Caco-2 (cell line): ENCODE measurements at regions of chr3 and their contacts with region 1.

Region 1: DNA sequence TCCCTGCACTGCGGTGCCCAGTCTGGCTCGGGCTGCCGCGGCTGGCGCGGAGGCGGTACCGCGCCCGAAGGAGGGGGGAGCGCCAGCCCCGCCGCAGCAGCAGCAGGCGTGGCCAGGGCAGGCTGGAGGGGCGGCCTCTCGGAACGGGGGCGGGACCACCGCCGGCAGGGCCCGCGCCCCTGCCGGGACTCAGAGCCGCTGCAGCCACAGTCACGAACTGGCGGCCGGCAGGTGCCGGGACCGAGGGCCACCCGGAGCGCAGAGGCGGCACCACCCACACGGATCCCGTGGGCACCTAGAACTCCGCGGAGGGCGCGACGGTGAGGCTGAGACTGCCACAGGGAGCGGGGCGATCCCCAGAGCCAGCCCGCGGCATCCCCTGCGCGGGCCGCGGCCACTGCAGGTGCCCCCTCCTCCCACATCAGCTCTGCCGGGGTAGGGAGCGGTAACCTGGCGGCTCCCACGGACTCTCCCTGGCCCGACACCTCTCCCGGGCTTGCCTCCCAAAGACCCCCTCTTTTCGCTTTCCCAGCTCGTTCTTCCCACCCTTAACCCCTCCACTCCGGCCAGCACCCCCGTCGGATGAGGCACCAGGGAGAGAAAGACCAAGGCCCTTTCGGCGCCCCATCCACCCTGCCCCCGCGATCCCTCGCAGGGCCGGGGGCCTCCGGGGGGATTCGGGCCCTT is at the start of gene VWA5B2:
- DNase-seq: peak; percentile 62 to 84
- H3K4me3 ChIP-seq: peak within 1 kb of the TSS; percentile 58
- H3K4me3 Mint-ChIP-seq: peak within 1 kb of the TSS; percentile 70
- H3K27ac Mint-ChIP-seq: no peak within 1 kb of the TSS
- H3K4me1 ChIP-seq: peaks cover 9% of the 10 kb centered on the region
- H3K4me1 Mint-ChIP-seq: peaks cover 7% of the 10 kb centered on the region
- H3K27me3 ChIP-seq: peaks cover 5% of the 10 kb centered on the region
- H3K27me3 Mint-ChIP-seq: peaks cover 27% of the 10 kb centered on the region
- CTCF ChIP-seq: peak in 1 of 2 experiments; percentile 5
- total RNA-seq, gene VWA5B2: 0.79 and 1.6 TPM in 2 replicates

Region 2: DNA sequence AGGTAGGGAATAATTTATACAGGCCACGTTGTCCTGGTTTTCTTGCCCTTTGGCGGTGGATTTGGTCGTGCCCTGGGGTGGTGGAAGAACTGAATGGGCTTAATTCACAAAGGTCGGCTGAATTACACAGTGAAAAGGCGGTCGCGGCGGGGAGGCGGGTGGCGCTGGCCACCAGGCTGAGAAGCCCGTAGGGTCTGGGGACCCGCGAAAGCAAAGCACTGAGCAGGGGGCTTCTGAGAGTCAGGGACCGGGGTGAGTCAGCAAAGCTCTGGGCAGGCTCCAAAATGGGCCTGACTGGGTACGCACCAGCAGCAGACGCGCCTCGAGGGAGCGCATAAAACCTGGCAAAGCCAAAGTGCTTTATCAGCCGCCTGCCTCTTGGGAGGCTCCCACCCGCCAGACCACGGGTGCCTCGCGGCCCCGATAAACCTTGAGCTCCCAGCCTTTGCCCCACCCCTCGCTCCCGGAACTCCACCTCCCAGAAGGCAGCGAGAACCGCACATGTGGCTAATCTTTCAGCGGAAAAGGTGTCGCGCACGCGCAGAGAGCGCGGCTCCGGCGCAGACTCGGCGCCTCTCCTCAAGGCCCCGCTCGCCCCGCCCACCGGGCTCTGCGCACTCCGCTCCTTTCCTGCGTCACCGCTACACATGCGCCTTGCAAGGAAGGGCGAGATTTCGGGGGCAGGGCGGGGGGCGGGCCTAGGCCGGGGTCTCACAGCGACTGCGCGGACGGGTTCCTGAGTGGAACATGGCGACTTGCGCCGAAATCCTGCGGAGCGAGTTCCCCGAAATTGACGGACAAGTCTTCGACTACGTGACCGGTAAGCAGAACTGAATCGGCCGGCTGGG is 43.9 kb before region 1 on chr3 and contains the start of gene ABCF3:
- CTCF ChIA-PET with region 1: interaction called, 3 read pairs
- POLR2A ChIA-PET with region 1: interaction called, 4 read pairs
- intact Hi-C with region 1: loop called (anchors 2 kb)
- DNase-seq: peak; percentile 98 to 99
- H3K4me3 ChIP-seq: peak within 1 kb of the TSS; percentile 95
- H3K4me3 Mint-ChIP-seq: peak within 1 kb of the TSS; percentile 86
- H3K27ac Mint-ChIP-seq: peak within 1 kb of the TSS; percentile 96
- H3K4me1 ChIP-seq: 0 out of 2 replicates have a peak, but pooled peaks cover 8% of the 10 kb centered on the region
- H3K4me1 Mint-ChIP-seq: peaks cover 15% of the 10 kb centered on the region
- H3K27me3 ChIP-seq: no peaks in the 10 kb centered on the region
- H3K27me3 Mint-ChIP-seq: no peaks in the 10 kb centered on the region
- CTCF ChIP-seq: no peak
- total RNA-seq, gene ABCF3: 68.8 and 69.8 TPM in 2 replicates

Region 3: GRCh38 chr3:184240384-184241140 is 11.0 kb after region 1 on chr3:
- CTCF ChIA-PET with region 1: interaction called, 10 read pairs
- POLR2A ChIA-PET with region 1: no interaction called
- intact Hi-C with region 1: no loop called
- DNase-seq: peak in 1 of 2 experiments; percentile 54
- H3K4me3 ChIP-seq: no peak overlapping the region
- H3K4me3 Mint-ChIP-seq: no peak overlapping the region
- H3K27ac Mint-ChIP-seq: no peak overlapping the region
- H3K4me1 ChIP-seq: no peaks in the 10 kb centered on the region
- H3K4me1 Mint-ChIP-seq: no peaks in the 10 kb centered on the region
- H3K27me3 ChIP-seq: no peaks in the 10 kb centered on the region
- H3K27me3 Mint-ChIP-seq: no peaks in the 10 kb centered on the region
- CTCF ChIP-seq: no peak

Region 4: GRCh38 chr3:184250167-184250828 is 20.8 kb after region 1 on chr3:
- CTCF ChIA-PET with region 1: interaction called, 3 read pairs
- POLR2A ChIA-PET with region 1: interaction called, 3 read pairs
- intact Hi-C with region 1: loop called (anchors 2 kb)
- DNase-seq: peak; percentile 93
- H3K4me3 ChIP-seq: peak overlapping the region; percentile 89
- H3K4me3 Mint-ChIP-seq: peak overlapping the region; percentile 89
- H3K27ac Mint-ChIP-seq: peak overlapping the region; percentile 96
- H3K4me1 ChIP-seq: no peaks in the 10 kb centered on the region
- H3K4me1 Mint-ChIP-seq: no peaks in the 10 kb centered on the region
- H3K27me3 ChIP-seq: no peaks in the 10 kb centered on the region
- H3K27me3 Mint-ChIP-seq: no peaks in the 10 kb centered on the region
- CTCF ChIP-seq: peak; percentile 74 to 92

Region 5: DNA sequence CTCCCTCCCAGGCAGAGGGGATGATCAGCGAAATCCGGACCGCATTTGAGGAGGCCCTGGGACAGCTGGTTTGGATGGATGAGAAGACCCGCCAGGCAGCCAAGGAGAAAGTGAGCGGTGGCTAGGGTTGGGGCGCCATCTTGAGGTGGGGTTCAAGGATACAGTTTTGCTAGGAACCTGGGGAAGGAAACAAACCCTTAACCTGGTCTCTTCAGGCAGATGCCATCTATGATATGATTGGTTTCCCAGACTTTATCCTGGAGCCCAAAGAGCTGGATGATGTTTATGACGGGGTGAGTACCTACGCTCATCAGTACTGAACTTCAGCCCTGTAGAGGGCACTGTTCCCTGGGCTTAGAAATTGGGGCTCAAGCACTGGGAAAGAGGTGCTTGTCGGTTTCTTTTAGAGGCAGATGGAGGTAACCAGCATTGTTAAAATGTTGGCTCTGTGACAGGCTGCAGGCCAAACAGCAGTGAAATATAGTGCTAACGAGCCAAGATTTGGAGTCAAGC is 59.9 kb after region 1 on chr3:
- CTCF ChIA-PET with region 1: interaction called, 4 read pairs
- POLR2A ChIA-PET with region 1: no interaction called
- intact Hi-C with region 1: loop called (anchors 1 kb)
- DNase-seq: peak; percentile 64 to 75
- H3K4me3 ChIP-seq: no peak overlapping the region
- H3K4me3 Mint-ChIP-seq: no peak overlapping the region
- H3K27ac Mint-ChIP-seq: no peak overlapping the region
- H3K4me1 ChIP-seq: no peaks in the 10 kb centered on the region
- H3K4me1 Mint-ChIP-seq: no peaks in the 10 kb centered on the region
- H3K27me3 ChIP-seq: no peaks in the 10 kb centered on the region
- H3K27me3 Mint-ChIP-seq: peaks cover 4% of the 10 kb centered on the region
- CTCF ChIP-seq: peak; percentile 40 to 63

Region 6: DNA sequence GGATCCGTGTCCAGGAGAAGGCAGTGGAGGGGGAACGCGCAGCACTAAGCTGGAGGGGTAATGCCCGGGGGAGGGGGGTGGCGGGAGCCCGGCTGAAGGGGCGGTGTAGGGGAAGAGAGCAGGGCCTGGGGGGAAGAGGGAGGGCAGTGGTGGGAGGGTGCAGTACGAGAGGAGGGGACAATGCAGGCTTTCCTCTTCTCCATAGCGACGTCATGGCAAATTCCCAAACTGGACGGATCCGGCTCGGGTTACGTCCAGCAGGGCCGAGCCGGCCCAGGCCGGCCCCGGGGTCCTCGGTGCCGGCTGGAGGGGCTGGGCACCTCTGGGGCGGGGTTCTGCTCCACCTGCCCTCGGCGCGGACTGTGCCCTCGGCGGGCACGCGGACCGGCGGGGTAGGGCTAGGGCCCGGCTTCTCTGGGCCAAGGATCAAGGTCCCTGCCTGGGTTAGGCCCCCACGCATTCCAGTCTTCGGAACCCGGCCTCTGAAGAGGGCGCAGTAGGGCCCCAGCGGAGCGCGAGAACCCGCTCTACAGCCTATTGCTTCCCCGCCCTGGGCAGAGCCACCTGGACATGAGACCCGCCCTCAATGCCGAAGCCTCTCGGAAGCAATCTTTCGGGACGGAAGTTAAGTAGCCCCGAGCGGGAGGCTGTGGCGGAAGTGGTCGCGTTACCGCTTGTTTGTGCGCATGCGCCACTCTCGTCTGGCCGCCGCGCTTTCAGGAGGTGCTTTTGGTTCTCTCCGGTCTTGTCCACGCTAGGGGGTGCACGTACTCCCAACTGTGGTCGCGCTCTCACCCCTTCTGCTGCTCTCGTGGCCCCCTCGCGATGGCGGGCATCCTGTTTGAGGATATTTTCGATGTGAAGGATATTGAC is 133.4 kb after region 1 on chr3:
- CTCF ChIA-PET with region 1: no interaction called
- POLR2A ChIA-PET with region 1: no interaction called
- intact Hi-C with region 1: no loop called
- DNase-seq: peak; percentile 98 to 99
- H3K4me3 ChIP-seq: peak overlapping the region; percentile 74
- H3K4me3 Mint-ChIP-seq: peak overlapping the region; percentile 97
- H3K27ac Mint-ChIP-seq: peak overlapping the region; percentile 97
- H3K4me1 ChIP-seq: peaks cover 6% of the 10 kb centered on the region; the same call in 1 of the 2 replicates
- H3K4me1 Mint-ChIP-seq: peaks cover 11% of the 10 kb centered on the region
- H3K27me3 ChIP-seq: no peaks in the 10 kb centered on the region; the same call in 1 of the 2 replicates
- H3K27me3 Mint-ChIP-seq: no peaks in the 10 kb centered on the region
- CTCF ChIP-seq: peak; percentile 61 to 66